ENCODE measurements at regions of chr1 and their contacts with region 1.

Region 1: GRCh38 chr1:92960395-92961130 is 699 bp downstream of the DIPK1A start:
- DNase-seq: peak; percentile 75
- H3K4me3 Mint-ChIP-seq: peak overlapping the region; percentile 88
- H3K27ac Mint-ChIP-seq: peak overlapping the region; percentile 96
- H3K4me1 Mint-ChIP-seq: peaks cover 39% of the 10 kb centered on the region
- H3K27me3 Mint-ChIP-seq: no peaks in the 10 kb centered on the region

Region 2: DNA sequence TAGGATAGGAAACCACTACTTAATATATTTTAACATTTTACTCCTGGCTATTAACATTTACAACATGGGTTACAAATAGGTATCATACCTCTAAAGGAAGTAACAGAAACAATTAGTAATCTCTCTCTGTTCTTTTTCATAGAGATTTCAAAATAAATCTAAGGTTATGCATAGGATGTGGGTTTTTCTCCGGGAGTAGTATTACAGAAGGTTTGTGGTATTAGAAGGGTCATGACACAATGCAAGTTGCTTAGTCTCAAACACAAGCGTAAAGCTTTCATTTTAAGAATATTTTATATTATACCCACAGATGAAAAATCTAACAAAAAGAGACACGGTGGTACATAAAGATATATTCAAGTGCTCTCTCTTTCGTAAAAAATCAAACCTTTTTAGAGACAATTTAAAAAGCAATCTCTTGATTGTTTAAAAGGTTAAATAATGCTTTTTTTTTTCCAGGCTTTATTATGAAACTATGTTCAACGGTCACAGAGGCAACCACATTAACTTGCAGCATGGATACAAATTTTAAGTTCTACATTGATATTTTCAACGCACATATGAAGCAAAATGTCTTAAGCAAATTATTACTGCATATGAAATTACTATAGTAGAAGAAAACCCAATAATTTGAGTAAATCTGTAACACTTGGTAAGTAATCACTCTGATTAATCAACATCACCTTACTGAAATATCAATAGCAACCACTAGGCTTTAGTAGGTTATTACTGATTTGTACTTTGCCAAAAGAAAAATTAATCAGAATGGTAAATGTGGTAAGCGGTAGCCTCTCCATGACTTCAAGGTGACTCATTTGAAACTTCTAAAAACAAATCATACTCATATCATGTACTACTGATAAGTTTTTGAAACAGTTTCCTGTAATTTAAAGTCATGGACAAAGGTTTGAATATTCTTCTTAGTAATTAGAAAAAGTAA is 376.5 kb before region 1 on chr1:
- CTCF ChIA-PET with region 1: no interaction called
- POLR2A ChIA-PET with region 1: no interaction called
- intact Hi-C with region 1: loop called (anchors 10 kb)
- DNase-seq: no peak
- H3K4me3 Mint-ChIP-seq: peak overlapping the region; percentile 65
- H3K27ac Mint-ChIP-seq: peak overlapping the region; percentile 92
- H3K4me1 Mint-ChIP-seq: peaks cover 64% of the 10 kb centered on the region
- H3K27me3 Mint-ChIP-seq: no peaks in the 10 kb centered on the region

Region 3: DNA sequence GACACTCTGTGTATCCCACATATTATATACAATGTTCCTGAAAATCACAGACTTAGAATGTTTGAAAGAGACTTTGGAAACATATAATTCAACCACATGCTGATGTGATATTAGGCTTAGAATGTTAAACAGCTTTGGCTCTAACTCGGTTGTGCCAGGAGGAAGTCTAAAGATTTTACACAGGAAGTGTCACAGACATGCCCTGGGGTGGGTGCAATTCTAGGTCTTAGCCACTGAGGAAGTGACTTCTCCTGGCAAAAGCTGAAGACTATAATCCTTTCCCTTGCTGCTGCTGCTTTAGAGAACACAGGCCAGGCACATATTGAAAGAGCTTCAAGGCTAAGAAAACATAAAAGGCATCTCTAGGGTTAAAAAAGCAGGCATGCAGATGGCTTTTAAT is 77.7 kb before region 1 on chr1:
- CTCF ChIA-PET with region 1: interaction called, 11 read pairs
- POLR2A ChIA-PET with region 1: interaction called, 3 read pairs
- intact Hi-C with region 1: no loop called
- DNase-seq: peak; percentile 42
- H3K4me3 Mint-ChIP-seq: no peak overlapping the region
- H3K27ac Mint-ChIP-seq: peak overlapping the region; percentile 64
- H3K4me1 Mint-ChIP-seq: peaks cover 32% of the 10 kb centered on the region
- H3K27me3 Mint-ChIP-seq: no peaks in the 10 kb centered on the region

Region 4: DNA sequence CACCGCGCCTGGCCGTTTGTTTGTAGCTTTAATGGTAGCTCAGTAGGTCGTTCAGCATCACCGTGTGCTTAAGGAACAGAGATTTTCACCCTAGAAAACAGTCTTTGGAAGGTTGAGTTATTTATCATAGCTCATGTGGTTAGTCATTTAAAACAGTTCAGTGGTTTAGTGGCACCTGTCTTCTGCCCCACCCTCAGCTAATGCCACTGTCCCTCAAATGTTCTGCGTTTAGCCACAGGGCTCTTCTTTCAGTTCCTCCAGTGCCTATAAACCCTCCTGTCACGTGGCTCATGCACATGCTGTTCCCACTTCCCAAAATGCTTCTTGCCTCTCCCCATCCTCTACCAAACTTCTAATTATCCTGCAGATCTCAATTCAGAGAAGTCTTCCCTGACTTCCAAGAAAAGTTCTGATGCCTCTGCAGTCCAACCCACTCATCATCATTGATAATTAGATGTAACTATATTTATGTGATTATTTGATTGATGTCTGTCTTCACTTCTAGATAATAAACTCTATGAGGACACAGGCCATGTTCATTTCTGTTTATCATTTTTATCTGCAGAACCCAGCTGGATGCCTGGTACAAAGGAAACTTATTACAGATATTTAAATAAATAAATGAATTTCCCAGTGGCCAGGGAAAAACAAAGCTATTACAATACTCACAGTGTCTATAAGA is 15.1 kb after region 1 on chr1:
- CTCF ChIA-PET with region 1: interaction called, 28 read pairs
- POLR2A ChIA-PET with region 1: interaction called, 43 read pairs
- intact Hi-C with region 1: loop called (anchors 1 kb)
- DNase-seq: peak; percentile 51
- H3K4me3 Mint-ChIP-seq: no peak overlapping the region
- H3K27ac Mint-ChIP-seq: peak overlapping the region; percentile 62
- H3K4me1 Mint-ChIP-seq: peaks cover 63% of the 10 kb centered on the region
- H3K27me3 Mint-ChIP-seq: no peaks in the 10 kb centered on the region

Region 5: DNA sequence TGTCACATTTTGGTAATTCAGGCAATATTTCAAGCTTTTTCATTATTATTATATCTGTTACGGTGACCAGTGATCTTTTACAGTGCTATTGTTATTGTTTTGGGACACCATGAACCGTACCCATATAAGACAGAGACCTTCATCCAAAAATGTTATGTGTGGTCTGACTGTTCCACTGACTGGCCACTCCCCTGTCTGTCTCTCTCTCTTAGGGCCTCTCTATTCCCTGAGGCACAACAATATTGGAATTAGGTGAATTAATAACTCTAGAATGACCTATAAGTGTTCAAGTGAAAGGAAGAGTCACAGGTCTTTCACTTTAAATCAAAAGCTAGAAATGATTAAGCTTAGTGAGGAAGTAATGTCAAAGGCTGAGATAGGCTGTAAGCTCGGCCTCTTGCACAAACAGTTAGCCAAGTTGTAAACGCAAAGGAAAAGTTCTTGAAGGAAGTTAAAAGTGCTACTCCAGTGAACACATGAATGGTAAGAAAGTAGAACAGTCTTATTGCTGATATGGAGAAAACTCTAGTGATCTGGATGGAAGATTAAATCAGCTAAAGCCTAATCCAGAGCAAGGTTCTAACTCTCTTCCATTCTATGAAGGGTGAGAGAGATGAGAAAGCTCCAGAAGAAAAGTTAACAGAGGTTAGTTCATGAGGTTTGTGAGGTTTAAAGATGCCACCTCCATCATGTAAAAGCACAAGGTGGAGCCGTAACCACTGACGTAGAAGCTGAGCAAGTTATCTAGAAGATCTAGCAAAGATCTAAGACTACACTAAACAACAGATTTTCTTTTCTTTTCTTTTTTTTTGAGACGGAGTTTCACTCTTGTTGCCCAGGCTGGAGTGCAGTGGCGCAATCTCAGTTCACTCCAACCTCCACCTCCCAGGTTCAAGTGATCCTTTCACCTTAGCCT is 20.4 kb after region 1 on chr1:
- CTCF ChIA-PET with region 1: interaction called, 33 read pairs
- POLR2A ChIA-PET with region 1: interaction called, 43 read pairs
- intact Hi-C with region 1: loop called (anchors 1 kb)
- DNase-seq: peak; percentile 55
- H3K4me3 Mint-ChIP-seq: peak overlapping the region; percentile 58
- H3K27ac Mint-ChIP-seq: peak overlapping the region; percentile 98
- H3K4me1 Mint-ChIP-seq: peaks cover 58% of the 10 kb centered on the region
- H3K27me3 Mint-ChIP-seq: no peaks in the 10 kb centered on the region

Measured in activated CD4-positive, alpha-beta memory T cell treated with anti-CD3 and anti-CD28 coated beads for 36 hours (primary cell).